ENCODE measurements at regions of chr17 and their contacts with region 1.

Region 1: GRCh38 chr17:3913531-3914311 is 2.5 kb downstream of the P2RX1 start:
- DNase-seq: peak in 1 of 2 donors; percentile 90
- H3K4me3 ChIP-seq: no peak overlapping the region
- H3K27ac ChIP-seq: peak overlapping the region; percentile 39 to 51
- H3K4me1 ChIP-seq: peaks cover 3 to 14% of the 10 kb centered on the region in 2 donors
- H3K27me3 ChIP-seq: no peaks in the 10 kb centered on the region
- CTCF ChIP-seq: peak; percentile 98 to 100 (median 98)

Region 2: DNA sequence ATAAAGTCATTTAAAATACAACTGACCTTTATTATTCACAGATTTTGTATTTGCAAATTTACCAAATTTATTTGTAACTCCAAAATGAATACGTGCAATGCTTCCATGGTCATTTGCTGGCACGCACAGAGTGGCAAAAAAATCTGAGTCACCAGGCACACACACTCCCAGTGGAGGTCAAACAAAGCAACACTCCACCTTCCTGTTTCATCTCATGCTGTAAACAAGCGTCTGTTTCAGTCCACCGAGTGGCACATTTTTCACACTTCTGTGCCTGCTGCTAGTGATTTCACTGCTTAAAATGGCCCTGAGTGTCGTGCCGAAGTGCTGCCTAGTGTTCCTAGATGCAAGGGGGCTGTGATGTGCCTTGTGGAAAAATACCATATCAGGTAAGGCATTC is 94.9 kb before region 1 on chr17:
- intact Hi-C with region 1: no loop called
- DNase-seq: no peak
- H3K4me3 ChIP-seq: no peak overlapping the region
- H3K27ac ChIP-seq: no peak overlapping the region
- H3K4me1 ChIP-seq: no peaks in the 10 kb centered on the region
- H3K27me3 ChIP-seq: no peaks in the 10 kb centered on the region
- CTCF ChIP-seq: no peak

Region 3: GRCh38 chr17:3843935-3844516 is 69.7 kb before region 1 on chr17:
- intact Hi-C with region 1: no loop called
- DNase-seq: no peak
- H3K4me3 ChIP-seq: no peak overlapping the region
- H3K27ac ChIP-seq: no peak overlapping the region
- H3K4me1 ChIP-seq: peaks cover 0 to 11% of the 10 kb centered on the region in 2 donors
- H3K27me3 ChIP-seq: no peaks in the 10 kb centered on the region
- CTCF ChIP-seq: peak in 1 of 3 experiments; percentile 19

Region 4: DNA sequence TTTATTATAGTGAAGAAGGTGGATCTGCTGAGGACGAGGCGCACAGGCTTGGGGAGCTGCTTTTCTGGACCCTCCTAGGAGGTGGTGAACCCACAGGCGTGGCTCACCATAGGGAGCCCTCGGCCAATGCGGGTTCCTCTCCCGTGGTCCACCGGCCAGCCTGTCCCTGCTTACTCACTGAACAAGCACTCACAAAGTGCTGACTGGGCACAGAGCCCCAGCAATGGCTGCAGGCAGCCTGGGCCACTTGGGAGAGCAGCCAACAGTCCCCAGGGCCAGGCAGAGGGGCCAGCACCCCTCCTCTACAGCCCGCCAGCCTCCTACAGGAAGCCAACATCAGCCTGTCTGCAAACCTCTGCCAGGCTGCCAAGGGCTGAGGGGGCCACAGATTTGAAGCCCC is 48.5 kb before region 1 on chr17:
- intact Hi-C with region 1: loop called (anchors 5 kb)
- DNase-seq: peak; percentile 47 to 77
- H3K4me3 ChIP-seq: no peak overlapping the region
- H3K27ac ChIP-seq: peak overlapping the region; percentile 77 to 81
- H3K4me1 ChIP-seq: peaks cover 9 to 11% of the 10 kb centered on the region in 2 donors
- H3K27me3 ChIP-seq: no peaks in the 10 kb centered on the region
- CTCF ChIP-seq: no peak

Region 5: GRCh38 chr17:4004517-4005295 is 91.0 kb after region 1 on chr17:
- intact Hi-C with region 1: loop called (anchors 1 kb)
- DNase-seq: peak in 1 of 2 donors; percentile 65
- H3K4me3 ChIP-seq: no peak overlapping the region
- H3K27ac ChIP-seq: no peak overlapping the region
- H3K4me1 ChIP-seq: peaks cover 4 to 11% of the 10 kb centered on the region in 2 donors
- H3K27me3 ChIP-seq: no peaks in the 10 kb centered on the region
- CTCF ChIP-seq: peak; percentile 94 to 96 (median 94)

Region 6: GRCh38 chr17:4074831-4075495 is 161.2 kb after region 1 on chr17:
- intact Hi-C with region 1: loop called (anchors 2 kb)
- DNase-seq: no peak
- H3K4me3 ChIP-seq: no peak overlapping the region
- H3K27ac ChIP-seq: peak overlapping the region; percentile 45 to 62
- H3K4me1 ChIP-seq: peaks cover 0 to 11% of the 10 kb centered on the region in 2 donors
- H3K27me3 ChIP-seq: no peaks in the 10 kb centered on the region
- CTCF ChIP-seq: peak; percentile 43 to 75 (median 66)

Measured in ascending aorta (tissue), 2 donors.